ENCODE measurements at regions of chr14 and their contacts with region 1.

Region 1: GRCh38 chr14:97776934-97777558 is 979.9 kb downstream of the VRK1 start:
- DNase-seq: peak in 4 of 9 donors; percentile 3 to 27 (median 21)
- ATAC-seq: peak; percentile 46
- H3K4me3 ChIP-seq: no peak overlapping the region
- H3K4me3 Mint-ChIP-seq: peak overlapping the region in 6 of 10 donors; percentile 37 to 76 (median 46)
- H3K27ac ChIP-seq: no peak overlapping the region
- H3K27ac Mint-ChIP-seq: peak overlapping the region in 6 of 9 donors; percentile 32 to 86 (median 53)
- H3K4me1 ChIP-seq: peaks cover 0 to 14% of the 10 kb centered on the region in 2 donors
- H3K4me1 Mint-ChIP-seq: peaks cover 9 to 35% (median 28%) of the 10 kb centered on the region in 7 donors
- H3K27me3 ChIP-seq: no peaks in the 10 kb centered on the region
- H3K27me3 Mint-ChIP-seq: no peaks in the 10 kb centered on the region

Region 2: DNA sequence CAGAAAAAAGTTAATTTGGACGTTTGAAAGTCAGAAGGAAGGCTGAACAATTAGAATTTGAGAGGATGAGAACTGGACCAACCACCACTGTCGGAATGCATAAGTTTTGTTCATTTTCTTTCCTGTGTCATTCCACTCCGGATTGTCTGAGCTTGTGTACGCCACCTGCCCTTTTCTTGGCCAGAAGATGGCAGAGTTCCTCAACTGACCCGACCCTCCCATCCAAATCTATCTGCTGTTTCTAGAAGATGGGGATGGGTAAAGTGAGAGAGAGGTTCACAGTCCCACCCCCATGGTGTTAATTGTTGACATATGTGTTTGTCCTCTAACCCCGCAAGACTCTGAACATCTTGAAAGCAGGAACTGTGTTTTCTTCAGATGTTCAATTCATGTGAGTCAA is 591.9 kb before region 1 on chr14:
- CTCF ChIA-PET with region 1: interaction called, 5 read pairs
- POLR2A ChIA-PET with region 1: no interaction called
- intact Hi-C with region 1: loop called in 1 of 2 experiments (anchors 1 kb)
- DNase-seq: peak in 6 of 9 donors; percentile 1 to 36 (median 30)
- ATAC-seq: peak; percentile 57
- H3K4me3 ChIP-seq: no peak overlapping the region
- H3K4me3 Mint-ChIP-seq: no peak overlapping the region
- H3K27ac ChIP-seq: no peak overlapping the region
- H3K27ac Mint-ChIP-seq: peak overlapping the region in 4 of 9 donors; percentile 7 to 53 (median 41)
- H3K4me1 ChIP-seq: no peaks in the 10 kb centered on the region
- H3K4me1 Mint-ChIP-seq: peaks cover 0 to 22% (median 6%) of the 10 kb centered on the region in 7 donors
- H3K27me3 ChIP-seq: no peaks in the 10 kb centered on the region
- H3K27me3 Mint-ChIP-seq: peaks cover 0 to 22% (median 0%) of the 10 kb centered on the region in 5 donors

Region 3: DNA sequence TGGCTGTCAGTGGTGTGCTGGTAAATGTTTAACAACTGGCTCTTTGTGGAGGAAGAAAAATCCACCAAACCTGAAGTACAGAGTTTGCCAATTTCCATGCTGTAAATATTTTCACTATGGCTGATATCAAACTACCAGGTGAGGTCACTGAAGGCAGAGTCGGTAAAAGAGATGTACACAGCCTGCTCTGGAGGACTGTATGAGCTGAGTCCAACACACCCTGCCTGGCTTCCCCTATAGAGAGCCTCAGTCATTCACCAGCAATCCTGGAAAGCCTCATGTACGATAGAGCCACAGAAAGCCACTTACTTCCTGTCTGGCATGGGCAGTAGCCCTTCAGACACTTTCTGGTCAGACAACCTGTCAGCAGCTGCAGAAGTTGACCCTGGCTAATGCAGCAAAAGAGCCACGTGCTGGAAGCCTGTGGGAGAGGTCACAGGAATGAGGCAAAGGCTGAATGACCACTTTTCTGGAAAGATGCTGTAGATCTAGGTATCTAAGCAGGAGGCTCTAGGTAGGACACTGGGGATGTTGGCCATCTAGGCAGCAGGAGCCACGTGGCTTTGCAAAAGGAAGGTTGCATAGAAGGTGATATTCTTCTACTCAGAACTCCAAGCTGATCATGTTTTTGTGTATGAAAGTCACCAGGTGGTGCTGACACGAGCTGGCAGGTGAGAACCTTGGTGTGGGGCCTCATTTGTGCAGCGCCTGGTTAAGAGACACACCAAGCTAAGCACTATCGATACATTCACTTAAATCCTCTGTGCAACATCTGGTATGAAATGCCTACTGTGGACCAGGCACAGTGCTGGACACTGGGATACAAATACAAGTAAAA is 425.9 kb before region 1 on chr14:
- CTCF ChIA-PET with region 1: no interaction called
- POLR2A ChIA-PET with region 1: no interaction called
- intact Hi-C with region 1: loop called in 1 of 2 experiments (anchors 5 kb)
- DNase-seq: peak in 4 of 9 donors; percentile 5 to 19 (median 10)
- ATAC-seq: no peak
- H3K4me3 ChIP-seq: no peak overlapping the region
- H3K4me3 Mint-ChIP-seq: no peak overlapping the region
- H3K27ac ChIP-seq: no peak overlapping the region
- H3K27ac Mint-ChIP-seq: peak overlapping the region in 1 of 9 donors; percentile 24
- H3K4me1 ChIP-seq: no peaks in the 10 kb centered on the region
- H3K4me1 Mint-ChIP-seq: peaks cover 0 to 19% (median 8%) of the 10 kb centered on the region in 7 donors
- H3K27me3 ChIP-seq: no peaks in the 10 kb centered on the region
- H3K27me3 Mint-ChIP-seq: peaks cover 0 to 5% (median 0%) of the 10 kb centered on the region in 5 donors

Region 4: GRCh38 chr14:97578982-97579548 is 198.0 kb before region 1 on chr14:
- CTCF ChIA-PET with region 1: no interaction called
- POLR2A ChIA-PET with region 1: no interaction called
- intact Hi-C with region 1: loop called in 1 of 2 experiments (anchors 2 kb)
- DNase-seq: no peak
- ATAC-seq: no peak
- H3K4me3 ChIP-seq: no peak overlapping the region
- H3K4me3 Mint-ChIP-seq: no peak overlapping the region
- H3K27ac ChIP-seq: no peak overlapping the region
- H3K27ac Mint-ChIP-seq: peak overlapping the region in 2 of 9 donors; percentile 22 to 26
- H3K4me1 ChIP-seq: no peaks in the 10 kb centered on the region
- H3K4me1 Mint-ChIP-seq: peaks cover 4 to 31% (median 21%) of the 10 kb centered on the region in 7 donors
- H3K27me3 ChIP-seq: no peaks in the 10 kb centered on the region
- H3K27me3 Mint-ChIP-seq: no peaks in the 10 kb centered on the region

Region 5: GRCh38 chr14:97707603-97708002 is 69.4 kb before region 1 on chr14:
- CTCF ChIA-PET with region 1: no interaction called
- POLR2A ChIA-PET with region 1: no interaction called
- intact Hi-C with region 1: loop called in 1 of 2 experiments (anchors 5 kb)
- DNase-seq: peak in 1 of 9 donors; percentile 19
- ATAC-seq: peak; percentile 25
- H3K4me3 ChIP-seq: peak overlapping the region; percentile 7
- H3K4me3 Mint-ChIP-seq: peak overlapping the region in 9 of 10 donors; percentile 7 to 83 (median 52)
- H3K27ac ChIP-seq: no peak overlapping the region
- H3K27ac Mint-ChIP-seq: peak overlapping the region; percentile 26 to 96 (median 85)
- H3K4me1 ChIP-seq: peaks cover 81 to 85% of the 10 kb centered on the region in 2 donors
- H3K4me1 Mint-ChIP-seq: peaks cover 70 to 100% (median 98%) of the 10 kb centered on the region in 7 donors
- H3K27me3 ChIP-seq: no peaks in the 10 kb centered on the region
- H3K27me3 Mint-ChIP-seq: no peaks in the 10 kb centered on the region

Region 6: DNA sequence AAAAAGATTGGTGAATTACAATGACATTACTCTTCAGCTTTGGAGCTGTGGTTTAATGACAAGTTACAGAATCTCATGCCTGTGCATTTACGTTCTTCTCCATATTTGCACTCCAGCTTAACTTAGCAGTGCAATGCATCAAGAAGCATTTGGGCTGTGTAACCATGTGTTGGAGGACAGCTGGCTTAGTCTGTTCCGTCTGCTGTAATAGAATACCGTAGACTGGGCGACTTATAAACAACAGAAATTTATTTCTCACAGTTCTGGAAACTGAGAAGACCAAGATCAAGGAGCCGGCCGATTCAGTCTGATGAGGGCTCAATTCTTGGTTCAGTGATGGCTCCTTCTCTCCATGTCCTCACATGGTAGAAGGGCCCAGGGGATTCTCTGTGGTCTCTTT is 551.5 kb after region 1 on chr14:
- CTCF ChIA-PET with region 1: no interaction called
- POLR2A ChIA-PET with region 1: no interaction called
- intact Hi-C with region 1: no loop called
- DNase-seq: no peak
- ATAC-seq: no peak
- H3K4me3 ChIP-seq: no peak overlapping the region
- H3K4me3 Mint-ChIP-seq: no peak overlapping the region
- H3K27ac ChIP-seq: no peak overlapping the region
- H3K27ac Mint-ChIP-seq: no peak overlapping the region
- H3K4me1 ChIP-seq: no peaks in the 10 kb centered on the region
- H3K4me1 Mint-ChIP-seq: peaks cover 0 to 14% (median 10%) of the 10 kb centered on the region in 7 donors
- H3K27me3 ChIP-seq: no peaks in the 10 kb centered on the region
- H3K27me3 Mint-ChIP-seq: peaks cover 0 to 2% (median 0%) of the 10 kb centered on the region in 5 donors

Measured in naive thymus-derived CD4-positive, alpha-beta T cell (primary cell).